ENCODE measurements at regions of chr3 and their contacts with region 1.

Region 1: DNA sequence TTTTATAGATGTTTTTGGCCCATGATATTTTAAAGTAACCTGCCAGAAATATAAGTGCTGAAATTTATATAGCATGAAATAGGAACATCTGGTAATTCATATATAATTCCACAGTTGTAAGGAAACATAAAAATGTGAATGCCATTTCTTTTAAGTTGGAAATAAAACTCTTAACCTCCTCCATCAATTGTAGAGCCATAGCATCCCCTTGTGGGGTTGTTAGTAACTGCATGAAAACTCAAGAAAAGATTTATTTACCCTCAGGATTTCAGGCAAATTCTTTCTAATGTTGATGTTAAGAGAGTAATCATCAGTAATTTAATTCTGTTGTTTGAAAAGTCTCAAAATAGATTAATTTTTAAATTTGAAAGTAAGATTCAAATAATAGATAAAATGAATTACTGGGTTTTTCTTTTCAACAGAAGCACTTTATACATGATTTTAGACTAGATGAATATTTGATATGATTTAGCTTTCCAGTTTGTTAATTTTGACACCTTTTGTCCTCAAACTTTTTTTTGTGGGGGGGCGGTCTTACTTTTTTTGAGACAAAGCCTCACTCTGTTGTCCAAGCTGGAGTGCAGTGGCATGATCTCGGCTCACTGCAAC is 74.7 kb downstream of the RASA2 start:
- DNase-seq: peak in 1 of 2 donors; percentile 54
- ATAC-seq: peak in 1 of 8 donors; percentile 43
- H3K4me3 ChIP-seq: no peak overlapping the region
- H3K27ac ChIP-seq: no peak overlapping the region
- H3K4me1 ChIP-seq: peaks cover 0 to 13% (median 0%) of the 10 kb centered on the region in 9 donors
- H3K27me3 ChIP-seq: no peaks in the 10 kb centered on the region
- CTCF ChIP-seq: peak; percentile 84 to 99 (median 94)

Region 2: GRCh38 chr3:141311496-141312353 is 249.8 kb before region 1 on chr3:
- intact Hi-C with region 1: loop called in 6 of 10 experiments (anchors 5 to 10 kb)
- DNase-seq: peak; percentile 98 to 99
- ATAC-seq: peak; percentile 97 to 100 (median 99)
- H3K4me3 ChIP-seq: peak overlapping the region; percentile 42 to 79 (median 72)
- H3K27ac ChIP-seq: peak overlapping the region; percentile 19 to 89 (median 86)
- H3K4me1 ChIP-seq: peaks cover 4 to 26% (median 16%) of the 10 kb centered on the region in 9 donors
- H3K27me3 ChIP-seq: no peaks in the 10 kb centered on the region
- CTCF ChIP-seq: peak; percentile 57 to 93 (median 80)

Region 3: GRCh38 chr3:141360888-141361598 is 200.5 kb before region 1 on chr3:
- intact Hi-C with region 1: loop called in 3 of 10 experiments (anchors 5 to 10 kb)
- DNase-seq: peak in 1 of 2 donors; percentile 46
- ATAC-seq: peak; percentile 67 to 89 (median 86)
- H3K4me3 ChIP-seq: peak overlapping the region in 6 of 10 donors; percentile 7 to 37 (median 26)
- H3K27ac ChIP-seq: peak overlapping the region in 6 of 10 donors; percentile 2 to 61 (median 44)
- H3K4me1 ChIP-seq: peaks cover 0 to 16% (median 5%) of the 10 kb centered on the region in 9 donors
- H3K27me3 ChIP-seq: no peaks in the 10 kb centered on the region
- CTCF ChIP-seq: peak; percentile 66 to 93 (median 78)

Region 4: DNA sequence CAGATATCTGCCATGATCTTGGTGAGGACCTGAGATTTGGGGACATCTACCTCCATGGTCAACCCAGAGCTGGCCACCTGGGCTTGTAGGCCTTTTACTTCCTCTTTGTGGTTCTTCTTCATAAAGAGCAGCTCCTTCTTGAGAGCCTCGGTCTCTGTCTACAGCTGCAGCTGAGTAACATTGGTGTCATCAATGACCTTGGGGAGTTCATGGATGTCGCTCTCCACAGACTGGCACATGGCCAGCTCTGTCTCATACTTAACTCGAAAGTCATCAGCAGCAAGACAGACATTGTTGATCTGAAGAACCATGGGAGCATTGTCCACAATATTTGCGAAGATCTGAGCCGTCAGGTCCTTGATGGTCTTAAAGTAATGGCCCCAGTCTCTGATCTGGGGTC is 90.4 kb before region 1 on chr3:
- intact Hi-C with region 1: loop called in 3 of 10 experiments (anchors 5 kb)
- DNase-seq: no peak
- ATAC-seq: no peak
- H3K4me3 ChIP-seq: no peak overlapping the region
- H3K27ac ChIP-seq: no peak overlapping the region
- H3K4me1 ChIP-seq: peaks cover 0 to 17% (median 0%) of the 10 kb centered on the region in 9 donors
- H3K27me3 ChIP-seq: no peaks in the 10 kb centered on the region
- CTCF ChIP-seq: no peak